Activated CD4-positive, alpha-beta T cell treated with anti-CD3 and anti-CD28 coated beads for 36 hours (primary cell): ENCODE measurements at regions of chr10 and their contacts with region 1.

Region 1: GRCh38 chr10:8671475-8671874 is 617.0 kb downstream of the GATA3 start:
- DNase-seq: no peak
- ATAC-seq: no peak
- H3K4me3 Mint-ChIP-seq: no peak overlapping the region
- H3K27ac Mint-ChIP-seq: no peak overlapping the region
- H3K4me1 Mint-ChIP-seq: no peaks in the 10 kb centered on the region
- H3K27me3 Mint-ChIP-seq: peaks cover 4% of the 10 kb centered on the region

Region 2: DNA sequence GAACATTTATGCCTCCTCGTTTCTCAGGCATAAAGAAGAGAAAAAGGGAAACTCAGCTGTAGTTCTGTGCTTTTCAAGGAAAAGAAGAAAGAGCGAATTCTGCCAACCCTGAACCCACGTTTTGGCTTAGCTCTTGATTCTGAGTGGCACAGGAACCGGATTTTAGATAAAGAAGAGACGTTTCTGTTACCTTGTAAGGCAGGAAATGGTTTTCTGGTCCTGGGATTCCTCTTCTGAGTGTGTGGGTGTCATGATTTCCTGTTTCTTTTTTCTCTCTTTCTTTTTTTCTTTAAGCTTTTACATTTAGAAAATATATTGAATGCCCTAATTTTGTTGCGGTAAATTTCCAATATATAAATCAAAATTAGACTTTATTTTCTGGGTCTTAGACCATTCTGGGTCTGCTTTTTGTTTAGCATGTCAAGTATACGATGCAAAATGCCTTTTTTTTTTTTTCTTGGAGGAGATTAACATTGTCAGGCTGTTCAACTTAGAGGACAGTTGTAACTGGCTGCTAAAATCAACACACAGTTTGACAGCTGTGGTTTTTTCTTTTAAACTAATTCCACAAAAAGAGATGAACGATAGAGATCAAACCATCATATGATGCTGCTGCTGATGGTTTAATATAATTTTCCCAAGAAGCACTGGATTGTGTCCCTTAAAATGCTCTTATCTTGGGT is 426.2 kb before region 1 on chr10:
- CTCF ChIA-PET with region 1: no interaction called
- POLR2A ChIA-PET with region 1: no interaction called
- intact Hi-C with region 1: no loop called
- DNase-seq: no peak
- ATAC-seq: no peak
- H3K4me3 Mint-ChIP-seq: peak overlapping the region; percentile 48
- H3K27ac Mint-ChIP-seq: peak overlapping the region; percentile 70
- H3K4me1 Mint-ChIP-seq: peaks cover 49% of the 10 kb centered on the region
- H3K27me3 Mint-ChIP-seq: no peaks in the 10 kb centered on the region

Region 3: DNA sequence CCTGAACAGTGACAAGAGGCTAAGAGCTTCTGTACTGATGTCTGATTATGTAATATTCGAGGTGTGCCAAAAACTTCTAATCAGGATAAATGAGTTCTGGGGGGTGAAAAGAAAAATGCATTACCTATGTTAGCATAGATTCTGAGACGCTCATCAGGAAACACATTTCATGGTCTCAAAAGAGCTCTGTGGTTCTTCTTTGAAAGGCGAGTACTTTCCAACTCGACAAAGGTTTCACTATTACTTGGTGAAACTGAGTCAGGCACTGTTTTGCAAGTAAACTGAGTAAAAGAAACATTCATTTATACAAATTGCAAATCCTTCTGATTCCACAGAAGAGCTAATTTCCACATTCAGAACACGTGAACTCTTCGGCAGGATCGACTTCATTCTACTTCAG is 93.8 kb before region 1 on chr10:
- CTCF ChIA-PET with region 1: no interaction called
- POLR2A ChIA-PET with region 1: no interaction called
- intact Hi-C with region 1: no loop called
- DNase-seq: peak; percentile 12
- ATAC-seq: peak; percentile 71
- H3K4me3 Mint-ChIP-seq: no peak overlapping the region
- H3K27ac Mint-ChIP-seq: peak overlapping the region; percentile 59
- H3K4me1 Mint-ChIP-seq: peaks cover 36% of the 10 kb centered on the region
- H3K27me3 Mint-ChIP-seq: peaks cover 31% of the 10 kb centered on the region

Region 4: DNA sequence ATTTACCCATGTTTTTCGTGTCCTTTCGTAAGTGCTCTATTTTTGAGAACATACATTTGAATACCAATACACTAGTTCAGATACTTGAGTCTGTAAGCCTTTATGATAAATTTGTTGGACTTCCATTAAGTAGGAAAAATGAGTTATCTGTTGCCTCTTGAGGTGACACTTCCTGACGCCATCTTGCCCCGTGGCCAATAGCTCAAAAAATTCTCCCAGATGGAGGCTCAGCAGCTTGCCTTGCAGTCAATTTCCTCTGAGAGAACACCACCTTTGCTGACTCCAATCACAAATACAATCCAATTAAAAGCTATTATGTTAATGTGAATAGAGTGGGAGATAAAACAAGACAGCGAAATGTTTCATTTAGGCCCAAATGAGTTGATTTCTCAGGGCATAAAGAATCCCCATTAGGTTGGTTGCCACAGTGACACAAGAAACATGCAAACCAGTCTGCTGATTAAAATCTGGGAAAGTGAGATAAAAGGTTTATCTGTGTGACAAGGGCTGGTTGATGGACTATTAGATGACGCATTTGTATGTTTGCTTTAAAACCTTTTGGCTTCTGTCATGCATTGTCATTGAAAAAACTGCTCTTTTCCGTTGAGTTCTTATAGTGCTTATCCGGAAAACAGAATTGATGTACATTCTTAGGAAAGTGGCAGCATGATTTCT is 41.0 kb after region 1 on chr10:
- CTCF ChIA-PET with region 1: no interaction called
- POLR2A ChIA-PET with region 1: no interaction called
- intact Hi-C with region 1: loop called in 1 of 2 experiments (anchors 1 kb)
- DNase-seq: no peak
- ATAC-seq: no peak
- H3K4me3 Mint-ChIP-seq: no peak overlapping the region
- H3K27ac Mint-ChIP-seq: no peak overlapping the region
- H3K4me1 Mint-ChIP-seq: no peaks in the 10 kb centered on the region
- H3K27me3 Mint-ChIP-seq: peaks cover 3% of the 10 kb centered on the region